Panc1 (cell line): ENCODE measurements at regions of chr3 and their contacts with region 1.

Region 1: DNA sequence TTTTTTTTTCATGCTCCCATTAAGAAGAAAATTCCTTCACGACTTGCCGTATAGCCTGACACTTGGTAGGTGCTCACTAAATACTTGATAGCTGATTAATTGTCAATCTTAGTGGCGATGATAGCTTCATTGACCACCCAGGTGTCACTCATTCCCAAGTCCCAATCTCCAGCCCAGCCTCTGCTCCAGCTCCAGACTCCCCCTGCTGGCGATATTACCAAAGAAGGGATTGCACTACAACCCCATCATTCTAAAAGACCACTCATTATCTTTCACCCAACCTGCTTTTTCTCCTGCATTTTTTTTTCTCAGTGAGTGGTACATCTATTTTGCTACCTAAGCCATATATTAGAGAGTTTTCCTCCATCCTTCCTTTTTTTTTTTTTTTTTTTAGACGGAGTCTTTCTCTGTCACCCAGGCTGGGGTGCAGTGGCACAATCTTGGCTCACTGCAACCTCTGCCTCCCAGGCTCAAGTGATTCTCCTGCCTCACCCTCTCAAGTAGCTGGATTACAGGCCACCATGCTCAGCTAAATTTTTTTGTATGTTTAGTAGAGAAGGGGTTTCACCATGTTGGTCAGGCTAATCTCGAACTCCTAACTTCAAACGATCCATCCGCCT is 19.5 kb upstream of the COMMD2 start:
- DNase-seq: peak; percentile 32
- ATAC-seq: peak; percentile 89
- H3K4me3 ChIP-seq: no peak overlapping the region
- H3K27ac ChIP-seq: no peak overlapping the region
- H3K4me1 ChIP-seq: no peaks in the 10 kb centered on the region
- H3K27me3 ChIP-seq: no peaks in the 10 kb centered on the region
- CTCF ChIP-seq: peak; percentile 97

Region 2: DNA sequence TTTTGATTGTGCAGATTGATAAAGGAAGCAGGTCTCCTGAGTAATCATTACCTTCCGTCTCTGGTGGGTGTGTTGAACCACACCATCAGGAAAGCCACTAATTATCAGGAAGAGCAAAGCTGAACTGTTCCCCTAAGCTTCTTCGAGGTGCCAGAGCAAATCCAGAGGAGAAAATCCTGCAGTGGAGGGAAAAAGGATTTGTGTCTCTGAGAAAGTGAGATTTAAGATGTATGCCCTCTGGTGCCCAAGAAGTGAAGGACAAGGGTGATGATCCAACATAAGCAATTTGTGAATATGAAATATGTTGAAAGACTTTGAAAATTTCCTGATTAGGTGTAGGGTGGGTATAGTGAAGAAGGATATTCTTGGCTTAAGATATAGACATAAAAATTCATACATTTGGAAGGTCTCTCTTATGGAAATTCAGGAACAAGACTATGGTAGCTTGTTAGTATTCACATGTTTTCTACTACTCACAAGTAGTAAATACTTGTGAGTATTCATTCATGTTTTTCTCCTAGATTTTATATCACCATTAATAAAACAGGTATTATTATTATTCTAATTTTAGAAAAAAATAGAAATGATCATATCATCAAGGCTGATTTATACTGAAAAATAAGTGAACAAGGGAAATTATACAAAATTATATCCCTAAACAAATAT is 54.2 kb before region 1 on chr3:
- CTCF ChIA-PET with region 1: no interaction called
- POLR2A ChIA-PET with region 1: no interaction called
- in situ Hi-C with region 1: no loop called
- intact Hi-C with region 1: no loop called
- DNase-seq: peak; percentile 74
- ATAC-seq: peak; percentile 86
- H3K4me3 ChIP-seq: peak overlapping the region in 1 of 2 experiments; percentile 0; a peak in 1 of 4 replicates
- H3K27ac ChIP-seq: peak overlapping the region; percentile 80
- H3K4me1 ChIP-seq: peaks cover 8% of the 10 kb centered on the region; the same call in 1 of the 2 replicates
- H3K27me3 ChIP-seq: no peaks in the 10 kb centered on the region
- CTCF ChIP-seq: peak; percentile 83

Region 3: GRCh38 chr3:149796026-149796425 is 24.3 kb after region 1 on chr3:
- CTCF ChIA-PET with region 1: interaction called, 12 read pairs
- POLR2A ChIA-PET with region 1: interaction called, 3 read pairs
- in situ Hi-C with region 1: no loop called
- intact Hi-C with region 1: no loop called
- DNase-seq: no peak
- ATAC-seq: no peak
- H3K4me3 ChIP-seq: no peak overlapping the region
- H3K27ac ChIP-seq: no peak overlapping the region
- H3K4me1 ChIP-seq: no peaks in the 10 kb centered on the region
- H3K27me3 ChIP-seq: no peaks in the 10 kb centered on the region; the same call in 1 of the 2 replicates
- CTCF ChIP-seq: no peak